Caco-2 (cell line): ENCODE measurements at regions of chr1 and their contacts with region 1.

Region 1: GRCh38 chr1:245614476-245614875 is 459.7 kb downstream of the KIF26B start:
- DNase-seq: no peak
- H3K4me3 ChIP-seq: no peak overlapping the region
- H3K4me3 Mint-ChIP-seq: no peak overlapping the region
- H3K27ac Mint-ChIP-seq: no peak overlapping the region
- H3K4me1 ChIP-seq: peaks cover 35% of the 10 kb centered on the region
- H3K4me1 Mint-ChIP-seq: peaks cover 25% of the 10 kb centered on the region
- H3K27me3 ChIP-seq: no peaks in the 10 kb centered on the region
- H3K27me3 Mint-ChIP-seq: no peaks in the 10 kb centered on the region
- CTCF ChIP-seq: no peak

Region 2: DNA sequence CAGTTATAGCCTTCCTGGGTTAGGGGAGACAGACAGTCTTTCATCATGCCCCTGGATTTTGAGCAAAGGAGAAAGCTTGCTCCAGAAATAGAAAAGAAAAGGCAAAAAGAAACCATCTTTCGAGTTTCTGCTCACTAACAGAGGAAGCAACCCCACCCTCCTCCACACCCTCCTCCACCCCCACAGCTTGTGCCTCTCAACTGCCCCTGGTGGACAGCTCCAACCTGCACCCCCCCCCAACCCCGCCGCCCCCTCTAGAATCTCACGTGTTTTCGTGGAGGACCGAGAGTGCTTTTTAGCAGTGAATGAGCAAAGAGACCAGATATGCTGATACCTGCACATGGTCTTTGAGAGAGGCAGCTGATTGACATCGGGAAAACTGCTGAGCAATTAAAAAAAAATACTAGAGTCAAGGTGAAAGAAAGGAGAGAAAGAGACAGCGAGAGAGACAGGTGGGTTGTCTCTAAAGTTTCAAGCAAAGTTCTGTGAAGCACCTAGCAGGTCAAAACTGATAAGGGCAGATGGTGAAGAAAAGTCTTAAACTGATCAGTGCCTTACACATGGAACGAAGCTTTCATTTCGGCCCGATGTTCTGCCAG is 101.4 kb before region 1 on chr1:
- CTCF ChIA-PET with region 1: no interaction called
- POLR2A ChIA-PET with region 1: no interaction called
- intact Hi-C with region 1: loop called (anchors 5 kb)
- DNase-seq: peak in 1 of 2 experiments; percentile 8
- H3K4me3 ChIP-seq: no peak overlapping the region
- H3K4me3 Mint-ChIP-seq: no peak overlapping the region
- H3K27ac Mint-ChIP-seq: no peak overlapping the region
- H3K4me1 ChIP-seq: no peaks in the 10 kb centered on the region
- H3K4me1 Mint-ChIP-seq: peaks cover 16% of the 10 kb centered on the region
- H3K27me3 ChIP-seq: no peaks in the 10 kb centered on the region
- H3K27me3 Mint-ChIP-seq: no peaks in the 10 kb centered on the region
- CTCF ChIP-seq: no peak

Region 3: DNA sequence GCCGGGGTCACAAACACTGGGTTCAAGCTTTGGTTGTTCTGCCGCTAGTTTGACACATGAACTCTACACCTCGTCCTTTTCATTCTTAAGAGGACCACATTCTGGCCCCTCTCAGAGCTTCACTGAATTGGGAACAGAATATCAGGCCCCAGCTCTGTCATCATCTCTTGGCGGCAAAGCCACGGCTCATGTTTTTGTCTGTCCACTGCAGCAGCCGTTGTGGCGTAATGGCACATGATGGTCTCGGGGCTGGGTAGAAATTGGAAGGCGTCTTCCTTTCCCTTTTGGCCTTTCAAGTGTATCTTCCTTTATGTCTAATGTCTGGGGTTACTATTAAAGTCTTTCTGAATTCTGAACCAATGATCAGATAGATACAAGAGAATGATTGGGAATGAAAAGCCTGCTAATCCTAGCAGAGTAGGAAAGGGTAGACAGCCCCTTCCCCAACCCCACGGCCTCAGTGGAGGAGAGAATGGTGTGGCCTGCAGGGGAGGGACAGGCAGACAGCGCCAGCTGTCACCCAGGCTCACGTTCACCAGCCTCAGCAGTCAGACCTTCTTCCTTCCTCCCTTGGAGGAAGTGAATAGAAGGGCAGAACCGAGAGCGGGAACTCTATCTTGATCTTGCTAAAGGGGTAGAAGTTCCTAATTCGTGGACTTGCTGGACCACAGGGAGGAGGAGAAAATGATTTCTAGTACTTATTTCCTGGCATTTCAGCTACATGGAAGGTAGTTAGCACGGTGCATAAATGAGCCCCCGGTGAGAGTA is 38.4 kb after region 1 on chr1:
- CTCF ChIA-PET with region 1: no interaction called
- POLR2A ChIA-PET with region 1: interaction called, 5 read pairs
- intact Hi-C with region 1: loop called (anchors 1 kb)
- DNase-seq: no peak
- H3K4me3 ChIP-seq: no peak overlapping the region
- H3K4me3 Mint-ChIP-seq: no peak overlapping the region
- H3K27ac Mint-ChIP-seq: peak overlapping the region; percentile 81
- H3K4me1 ChIP-seq: peaks cover 31% of the 10 kb centered on the region
- H3K4me1 Mint-ChIP-seq: peaks cover 36% of the 10 kb centered on the region
- H3K27me3 ChIP-seq: no peaks in the 10 kb centered on the region
- H3K27me3 Mint-ChIP-seq: no peaks in the 10 kb centered on the region
- CTCF ChIP-seq: no peak